ENCODE measurements at regions of chr11 and their contacts with region 1.

Region 1: DNA sequence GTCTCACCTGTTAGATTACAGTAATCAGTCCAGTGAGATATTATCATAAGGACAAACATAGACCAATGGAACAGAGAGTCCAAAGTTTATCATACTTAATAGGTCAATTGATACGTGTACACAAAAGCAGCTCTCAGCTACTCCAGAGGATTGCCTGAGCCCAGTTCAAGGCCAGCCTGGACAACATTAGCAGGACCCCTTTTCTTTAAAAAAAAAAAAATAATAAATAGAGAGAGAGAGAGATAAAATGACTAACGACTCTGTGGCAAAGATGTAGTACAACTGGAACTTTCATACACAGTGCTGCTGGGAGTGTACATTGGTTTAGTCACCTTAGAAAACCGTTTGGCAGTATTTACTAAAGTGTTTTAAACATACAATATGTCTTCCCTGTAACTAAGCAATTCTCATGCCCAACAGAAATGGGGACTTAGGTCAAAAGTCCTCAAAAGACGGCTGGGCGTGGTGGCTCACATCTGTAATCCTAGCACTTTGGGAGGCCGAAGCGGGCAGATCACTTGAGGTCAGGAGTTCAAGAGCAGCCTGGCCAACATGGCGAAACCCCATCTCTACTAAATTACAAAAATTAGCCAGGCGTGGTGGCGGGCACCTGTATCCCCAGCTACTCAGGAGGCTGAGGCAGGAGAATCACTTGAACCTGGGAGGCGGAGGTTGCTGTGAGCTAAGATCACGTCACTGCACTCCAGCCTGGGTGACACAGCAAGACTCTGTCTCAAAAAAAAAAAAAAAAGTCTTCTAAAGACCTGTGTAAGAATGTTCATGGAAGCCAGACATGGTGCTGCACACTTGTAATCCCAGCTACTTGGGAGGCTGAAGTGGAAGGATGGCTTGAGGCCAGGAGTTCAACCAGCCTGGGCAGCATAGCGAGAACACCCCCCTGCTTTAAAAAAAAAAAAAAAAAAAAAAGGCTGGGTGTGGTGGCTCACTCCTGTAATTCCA is 10.7 kb downstream of the SNX32 start:
- DNase-seq: no peak
- ATAC-seq: no peak
- H3K4me3 ChIP-seq: no peak overlapping the region
- H3K27ac ChIP-seq: no peak overlapping the region
- H3K4me1 ChIP-seq: 0 out of 2 replicates have a peak, but pooled peaks cover 4% of the 10 kb centered on the region
- H3K27me3 ChIP-seq: no peaks in the 10 kb centered on the region
- CTCF ChIP-seq: no peak

Region 2: DNA sequence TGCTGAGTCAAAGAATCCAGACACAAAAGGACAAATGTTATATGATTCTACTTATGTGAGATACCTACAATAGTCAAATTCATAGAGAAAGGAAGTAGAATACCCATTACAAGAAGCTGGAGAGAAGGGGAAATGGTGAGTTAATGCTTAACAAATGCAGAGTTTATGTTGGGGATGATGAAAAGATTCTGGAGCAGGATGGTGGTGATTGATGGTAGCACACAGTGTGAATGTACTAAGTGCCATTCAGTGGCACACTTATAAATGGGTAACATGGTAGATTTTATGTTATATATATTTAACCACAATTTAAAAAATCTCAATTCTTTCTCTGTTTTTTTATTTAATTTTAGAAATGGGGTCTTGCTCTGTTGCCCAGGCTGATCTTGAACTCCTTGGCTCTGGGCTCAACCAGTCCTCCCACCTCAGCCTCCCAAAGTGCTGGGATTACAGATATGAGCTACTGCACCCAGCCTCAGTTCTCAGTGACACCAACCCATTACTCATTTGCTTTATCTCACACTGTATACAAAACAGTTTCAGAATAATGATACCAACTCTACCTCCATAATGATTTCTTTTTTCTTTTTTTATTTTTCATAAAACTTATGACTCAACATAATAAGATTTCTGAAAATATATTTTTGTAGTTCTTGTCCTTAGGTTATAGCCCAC is 172.2 kb before region 1 on chr11:
- CTCF ChIA-PET with region 1: no interaction called
- POLR2A ChIA-PET with region 1: no interaction called
- in situ Hi-C with region 1: no loop called
- intact Hi-C with region 1: no loop called
- DNase-seq: no peak
- ATAC-seq: 0 out of 2 replicates have a peak, but pooled peaks have one; percentile 52
- H3K4me3 ChIP-seq: no peak overlapping the region
- H3K27ac ChIP-seq: no peak overlapping the region
- H3K4me1 ChIP-seq: no peaks in the 10 kb centered on the region
- H3K27me3 ChIP-seq: no peaks in the 10 kb centered on the region
- CTCF ChIP-seq: no peak

Region 3: GRCh38 chr11:65720237-65720934 is 124.1 kb before region 1 on chr11 and contains the start of gene RNASEH2C:
- CTCF ChIA-PET with region 1: no interaction called
- POLR2A ChIA-PET with region 1: interaction called, 16 read pairs
- in situ Hi-C with region 1: no loop called
- intact Hi-C with region 1: no loop called
- DNase-seq: peak; percentile 58
- ATAC-seq: peak; percentile 92
- H3K4me3 ChIP-seq: peak within 1 kb of the TSS; percentile 72 to 82
- H3K27ac ChIP-seq: peak within 1 kb of the TSS; percentile 83
- H3K4me1 ChIP-seq: peaks cover 14% of the 10 kb centered on the region
- H3K27me3 ChIP-seq: no peaks in the 10 kb centered on the region
- CTCF ChIP-seq: no peak
- total RNA-seq, gene RNASEH2C: 107 TPM

Measured in Panc1 (cell line).